MCF 10A (cell line): ENCODE measurements at regions of chr7 and their contacts with region 1.

Region 1: DNA sequence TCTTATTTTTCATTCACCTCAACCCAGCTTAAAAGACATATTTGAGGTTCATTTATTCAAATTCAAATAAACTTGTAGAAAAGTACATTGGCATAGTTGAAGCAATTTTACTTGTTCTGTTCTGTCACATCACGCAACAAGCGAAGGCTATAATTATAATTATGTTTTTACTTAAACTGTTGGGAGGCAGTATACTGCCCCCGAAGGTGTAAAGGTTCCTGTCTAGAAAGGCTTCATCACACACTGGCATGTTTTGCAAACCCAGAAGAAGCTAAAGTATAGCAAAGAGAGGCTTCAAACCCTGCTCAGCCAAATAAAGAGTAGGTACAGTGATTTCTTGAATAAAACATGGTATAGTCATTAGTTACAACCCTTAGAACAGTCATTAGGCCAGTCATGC is 62.6 kb downstream of the CDCA7L start:
- DNase-seq: no peak
- H3K4me3 Mint-ChIP-seq: no peak overlapping the region
- H3K27ac Mint-ChIP-seq: no peak overlapping the region
- H3K4me1 Mint-ChIP-seq: no peaks in the 10 kb centered on the region
- H3K27me3 Mint-ChIP-seq: no peaks in the 10 kb centered on the region
- CTCF ChIP-seq: no peak

Region 2: GRCh38 chr7:21076054-21076453 is 807.0 kb before region 1 on chr7:
- CTCF ChIA-PET with region 1: no interaction called
- POLR2A ChIA-PET with region 1: no interaction called
- intact Hi-C with region 1: loop called (anchors 5 kb)
- DNase-seq: no peak
- H3K4me3 Mint-ChIP-seq: no peak overlapping the region
- H3K27ac Mint-ChIP-seq: no peak overlapping the region
- H3K4me1 Mint-ChIP-seq: peaks cover 5% of the 10 kb centered on the region
- H3K27me3 Mint-ChIP-seq: no peaks in the 10 kb centered on the region
- CTCF ChIP-seq: no peak

Region 3: DNA sequence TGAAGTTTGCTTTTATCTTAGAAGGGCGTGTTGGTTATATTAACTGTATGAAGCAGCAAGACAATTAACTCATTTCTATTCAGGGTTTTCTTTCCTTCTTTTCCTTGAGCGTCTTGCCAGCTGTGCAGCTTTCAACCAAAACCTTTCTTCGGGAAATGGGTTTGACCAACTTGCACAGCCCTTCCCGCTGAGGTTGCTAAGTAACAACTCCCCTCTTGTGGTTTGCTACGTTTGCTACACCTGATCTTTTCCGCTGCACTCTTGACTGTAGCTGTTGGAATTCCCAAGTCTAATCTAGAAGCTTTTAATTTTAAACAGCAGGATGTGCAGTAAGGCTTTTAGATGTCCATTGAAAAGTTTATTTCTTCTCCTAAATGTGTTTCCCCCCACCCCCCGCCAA is 54.2 kb before region 1 on chr7:
- CTCF ChIA-PET with region 1: no interaction called
- POLR2A ChIA-PET with region 1: no interaction called
- intact Hi-C with region 1: loop called (anchors 2 kb)
- DNase-seq: no peak
- H3K4me3 Mint-ChIP-seq: no peak overlapping the region
- H3K27ac Mint-ChIP-seq: no peak overlapping the region
- H3K4me1 Mint-ChIP-seq: no peaks in the 10 kb centered on the region
- H3K27me3 Mint-ChIP-seq: no peaks in the 10 kb centered on the region
- CTCF ChIP-seq: no peak